Activated CD8-positive, alpha-beta T cell treated with anti-CD3 and anti-CD28 coated beads for 36 hours (primary cell): ENCODE measurements at regions of chr19 and their contacts with region 1.

Region 1: DNA sequence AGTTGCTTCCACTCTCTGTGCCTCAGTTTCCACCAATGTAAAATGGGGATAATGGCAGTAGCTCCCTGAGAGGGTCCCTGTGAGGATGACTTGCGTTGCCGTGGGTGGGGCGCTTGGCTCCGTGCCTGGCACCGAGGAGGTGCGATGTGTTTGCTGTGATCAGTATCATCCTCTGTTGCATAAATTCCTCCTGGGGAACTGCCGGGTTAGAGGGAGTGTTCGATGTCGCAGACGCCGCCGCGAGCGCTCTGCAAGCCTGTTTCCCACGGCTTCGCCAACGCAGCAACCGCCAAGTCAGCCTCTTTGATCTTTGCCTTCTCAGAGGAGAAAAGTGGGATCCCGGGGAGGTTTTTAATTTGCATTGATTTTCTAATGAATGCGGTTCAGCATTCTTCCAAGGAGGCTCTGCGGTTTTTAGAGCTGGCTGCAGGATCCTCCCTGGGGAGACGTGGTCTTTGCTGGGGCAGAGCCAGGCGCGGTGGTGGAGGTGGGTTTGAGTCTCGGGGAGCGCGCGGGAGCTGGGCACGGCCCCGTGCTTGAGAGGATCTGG is 7.6 kb downstream of the GPR32 start:
- DNase-seq: no peak
- ATAC-seq: no peak
- H3K4me3 Mint-ChIP-seq: no peak overlapping the region
- H3K27ac Mint-ChIP-seq: no peak overlapping the region
- H3K4me1 Mint-ChIP-seq: no peaks in the 10 kb centered on the region
- H3K27me3 Mint-ChIP-seq: peaks cover 54% of the 10 kb centered on the region
- CTCF ChIP-seq: no peak

Region 2: GRCh38 chr19:50590191-50590590 is 187.6 kb before region 1 on chr19:
- CTCF ChIA-PET with region 1: no interaction called
- POLR2A ChIA-PET with region 1: no interaction called
- intact Hi-C with region 1: loop called (anchors 5 kb)
- DNase-seq: no peak
- ATAC-seq: no peak
- H3K4me3 Mint-ChIP-seq: no peak overlapping the region
- H3K27ac Mint-ChIP-seq: no peak overlapping the region
- H3K4me1 Mint-ChIP-seq: no peaks in the 10 kb centered on the region
- H3K27me3 Mint-ChIP-seq: peaks cover 9% of the 10 kb centered on the region
- CTCF ChIP-seq: no peak

Region 3: GRCh38 chr19:50607874-50608785 is 169.7 kb before region 1 on chr19:
- CTCF ChIA-PET with region 1: interaction called, 10 read pairs
- POLR2A ChIA-PET with region 1: no interaction called
- intact Hi-C with region 1: loop called (anchors 5 kb)
- DNase-seq: peak; percentile 92
- ATAC-seq: peak; percentile 94
- H3K4me3 Mint-ChIP-seq: peak overlapping the region; percentile 31
- H3K27ac Mint-ChIP-seq: no peak overlapping the region
- H3K4me1 Mint-ChIP-seq: peaks cover 8% of the 10 kb centered on the region
- H3K27me3 Mint-ChIP-seq: peaks cover 33% of the 10 kb centered on the region
- CTCF ChIP-seq: peak; percentile 63

Region 4: GRCh38 chr19:50724522-50725217 is 53.2 kb before region 1 on chr19:
- CTCF ChIA-PET with region 1: interaction called, 7 read pairs
- POLR2A ChIA-PET with region 1: interaction called, 5 read pairs
- intact Hi-C with region 1: loop called (anchors 5 kb)
- DNase-seq: peak; percentile 99
- ATAC-seq: peak; percentile 86
- H3K4me3 Mint-ChIP-seq: peak overlapping the region; percentile 83
- H3K27ac Mint-ChIP-seq: peak overlapping the region; percentile 84
- H3K4me1 Mint-ChIP-seq: peaks cover 25% of the 10 kb centered on the region
- H3K27me3 Mint-ChIP-seq: peaks cover 42% of the 10 kb centered on the region
- CTCF ChIP-seq: peak; percentile 85